BJ (cell line): ENCODE measurements at regions of chr7 and their contacts with region 1.

Region 1: GRCh38 chr7:71733107-71733870 is 601.3 kb downstream of the GALNT17 start:
- DNase-seq: no peak
- H3K4me3 ChIP-seq: no peak overlapping the region
- H3K27me3 ChIP-seq: no peaks in the 10 kb centered on the region
- CTCF ChIP-seq: peak; percentile 85

Region 2: DNA sequence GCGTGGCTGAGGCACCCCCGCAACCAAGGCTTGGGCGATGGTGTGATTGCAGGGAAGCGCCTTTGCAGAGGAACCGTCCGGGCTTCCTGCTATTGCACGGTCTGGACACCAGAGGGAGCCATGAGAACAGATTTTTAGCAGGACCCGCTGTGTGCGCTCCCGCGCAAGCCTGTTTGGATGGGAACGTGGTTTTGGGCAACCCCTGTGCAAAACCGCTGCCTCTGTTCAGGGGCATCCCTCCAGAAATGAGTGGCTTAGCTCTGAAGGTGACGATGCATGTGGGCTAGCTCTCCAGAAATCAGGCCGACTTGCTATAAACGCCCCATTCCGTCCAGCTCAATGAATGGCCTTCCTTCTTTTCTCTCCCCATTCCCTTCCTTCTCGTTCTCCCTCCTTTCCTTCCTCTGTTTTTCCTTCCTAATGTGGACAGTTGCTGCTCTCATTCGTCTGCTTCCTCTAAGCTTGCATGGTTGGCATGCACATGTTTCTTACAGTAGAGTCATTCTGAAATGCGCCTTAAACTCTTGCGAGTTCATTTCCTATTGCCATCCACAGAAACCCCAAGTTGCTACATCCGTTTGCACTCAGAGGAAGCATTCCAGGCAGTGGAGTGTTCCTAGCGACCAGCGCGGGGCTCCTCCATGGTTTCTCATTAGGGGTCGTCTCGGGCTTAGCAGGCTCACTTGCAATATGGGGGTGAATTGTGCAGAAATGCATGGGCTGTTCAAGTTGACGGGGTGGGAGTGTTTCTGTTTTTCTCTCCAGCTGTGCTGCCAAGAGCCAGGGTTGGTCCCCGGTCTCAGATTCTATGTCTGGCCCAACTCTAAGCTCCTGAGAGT is 903.8 kb before region 1 on chr7:
- CTCF ChIA-PET with region 1: interaction called, 12 read pairs
- POLR2A ChIA-PET with region 1: no interaction called
- DNase-seq: no peak
- H3K4me3 ChIP-seq: peak overlapping the region; percentile 19
- H3K27me3 ChIP-seq: no peaks in the 10 kb centered on the region
- CTCF ChIP-seq: peak; percentile 77

Region 3: GRCh38 chr7:70856866-70857630 is 876.2 kb before region 1 on chr7:
- CTCF ChIA-PET with region 1: interaction called, 14 read pairs
- POLR2A ChIA-PET with region 1: no interaction called
- DNase-seq: no peak
- H3K4me3 ChIP-seq: no peak overlapping the region
- H3K27me3 ChIP-seq: no peaks in the 10 kb centered on the region
- CTCF ChIP-seq: peak; percentile 81